ENCODE measurements at regions of chr1 and their contacts with region 1.

Region 1: GRCh38 chr1:200488375-200489165 is 78.7 kb upstream of the ZNF281 start:
- DNase-seq: peak; percentile 89
- H3K4me3 ChIP-seq: no peak overlapping the region
- H3K27ac ChIP-seq: no peak overlapping the region
- H3K4me1 ChIP-seq: peaks cover 13% of the 10 kb centered on the region
- H3K27me3 ChIP-seq: no peaks in the 10 kb centered on the region

Region 2: GRCh38 chr1:200139661-200140250 is 348.8 kb before region 1 on chr1:
- in situ Hi-C with region 1: loop called (anchors 25 kb)
- DNase-seq: peak; percentile 81
- H3K4me3 ChIP-seq: no peak overlapping the region
- H3K27ac ChIP-seq: no peak overlapping the region
- H3K4me1 ChIP-seq: no peaks in the 10 kb centered on the region
- H3K27me3 ChIP-seq: no peaks in the 10 kb centered on the region

Region 3: GRCh38 chr1:200279810-200280411 is 208.7 kb before region 1 on chr1:
- in situ Hi-C with region 1: loop called (anchors 25 kb)
- DNase-seq: peak; percentile 61
- H3K4me3 ChIP-seq: no peak overlapping the region
- H3K27ac ChIP-seq: no peak overlapping the region
- H3K4me1 ChIP-seq: no peaks in the 10 kb centered on the region
- H3K27me3 ChIP-seq: no peaks in the 10 kb centered on the region